ENCODE measurements at regions of chr14 and their contacts with region 1.

Region 1: DNA sequence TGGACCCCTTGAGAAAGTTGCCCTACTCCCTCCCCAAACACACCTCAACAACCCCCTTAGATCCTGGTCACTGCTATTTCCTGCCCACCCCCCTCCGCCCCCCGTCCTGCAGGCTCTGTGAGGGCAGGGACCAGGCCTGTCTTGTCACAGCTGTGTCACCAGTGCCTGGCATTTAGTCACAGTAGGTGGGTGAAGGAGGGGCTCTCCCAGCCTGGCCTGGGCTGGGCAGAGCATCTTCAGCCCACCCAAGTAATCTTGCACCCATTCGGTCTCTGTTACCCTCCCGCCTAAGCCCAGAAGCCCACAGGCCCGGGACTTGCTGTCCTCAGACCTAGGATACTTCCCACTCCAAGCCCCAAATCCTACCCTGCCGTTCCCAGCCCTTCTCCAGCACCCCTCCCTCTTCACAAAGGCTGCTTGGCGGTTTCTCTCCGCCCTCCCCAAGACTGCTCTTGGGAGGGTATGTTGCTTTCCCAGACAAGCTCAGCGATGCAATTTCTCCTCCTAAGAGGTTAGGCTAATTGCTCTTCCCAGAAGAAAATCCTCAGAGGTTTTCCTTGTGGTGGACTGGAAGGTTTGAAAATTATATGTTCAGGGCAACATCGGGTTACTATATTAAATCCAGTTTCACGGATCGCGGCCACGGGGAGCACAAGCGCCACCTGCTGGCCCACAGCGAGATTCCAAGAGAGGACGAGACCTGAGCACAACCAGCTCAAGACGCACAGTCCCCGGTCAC is 50.8 kb upstream of the ZFP36L1 start:
- DNase-seq: no peak
- ATAC-seq: peak; percentile 91
- H3K4me3 ChIP-seq: peak overlapping the region in 1 of 2 experiments; percentile 21; a peak in 2 of 4 replicates
- H3K27ac ChIP-seq: no peak overlapping the region; the same call in 1 of the 2 replicates
- H3K4me1 ChIP-seq: no peaks in the 10 kb centered on the region
- H3K27me3 ChIP-seq: no peaks in the 10 kb centered on the region
- CTCF ChIP-seq: peak; percentile 94

Region 2: GRCh38 chr14:67837011-67837624 is 1006.5 kb before region 1 on chr14:
- CTCF ChIA-PET with region 1: no interaction called
- POLR2A ChIA-PET with region 1: no interaction called
- in situ Hi-C with region 1: no loop called
- intact Hi-C with region 1: loop called (anchors 10 kb)
- DNase-seq: peak; percentile 42
- ATAC-seq: no peak
- H3K4me3 ChIP-seq: no peak overlapping the region
- H3K27ac ChIP-seq: no peak overlapping the region
- H3K4me1 ChIP-seq: no peaks in the 10 kb centered on the region
- H3K27me3 ChIP-seq: no peaks in the 10 kb centered on the region
- CTCF ChIP-seq: peak; percentile 55; the same call in 1 of the 2 replicates

Region 3: GRCh38 chr14:68060198-68060597 is 783.4 kb before region 1 on chr14:
- CTCF ChIA-PET with region 1: interaction called, 11 read pairs
- POLR2A ChIA-PET with region 1: no interaction called
- in situ Hi-C with region 1: no loop called
- intact Hi-C with region 1: no loop called
- DNase-seq: no peak
- ATAC-seq: no peak
- H3K4me3 ChIP-seq: no peak overlapping the region
- H3K27ac ChIP-seq: peak overlapping the region; percentile 4; the same call in 1 of the 2 replicates
- H3K4me1 ChIP-seq: no peaks in the 10 kb centered on the region
- H3K27me3 ChIP-seq: no peaks in the 10 kb centered on the region
- CTCF ChIP-seq: no peak

Region 4: GRCh38 chr14:68961781-68962584 is 118.3 kb after region 1 on chr14:
- CTCF ChIA-PET with region 1: no interaction called
- POLR2A ChIA-PET with region 1: no interaction called
- in situ Hi-C with region 1: no loop called
- intact Hi-C with region 1: no loop called
- DNase-seq: no peak
- ATAC-seq: peak; percentile 59
- H3K4me3 ChIP-seq: no peak overlapping the region
- H3K27ac ChIP-seq: peak overlapping the region; percentile 44; the same call in 1 of the 2 replicates
- H3K4me1 ChIP-seq: peaks cover 61% of the 10 kb centered on the region
- H3K27me3 ChIP-seq: no peaks in the 10 kb centered on the region
- CTCF ChIP-seq: no peak

Measured in Panc1 (cell line).